ENCODE measurements at regions of chr1 and their contacts with region 1.

Region 1: GRCh38 chr1:171781176-171781875 is at the start of gene METTL13:
- DNase-seq: peak; percentile 98
- ATAC-seq: peak; percentile 99 to 100 (median 100)
- H3K4me3 ChIP-seq: peak within 1 kb of the TSS; percentile 39 to 91 (median 74)
- H3K27ac ChIP-seq: peak within 1 kb of the TSS; percentile 60 to 92 (median 86)
- H3K4me1 ChIP-seq: peaks cover 0 to 40% (median 22%) of the 10 kb centered on the region in 9 donors
- H3K27me3 ChIP-seq: no peaks in the 10 kb centered on the region
- CTCF ChIP-seq: peak in 1 of 9 donors; percentile 13
- total RNA-seq, gene METTL13: 12.9 to 20.2 (median 16.5) TPM

Region 2: DNA sequence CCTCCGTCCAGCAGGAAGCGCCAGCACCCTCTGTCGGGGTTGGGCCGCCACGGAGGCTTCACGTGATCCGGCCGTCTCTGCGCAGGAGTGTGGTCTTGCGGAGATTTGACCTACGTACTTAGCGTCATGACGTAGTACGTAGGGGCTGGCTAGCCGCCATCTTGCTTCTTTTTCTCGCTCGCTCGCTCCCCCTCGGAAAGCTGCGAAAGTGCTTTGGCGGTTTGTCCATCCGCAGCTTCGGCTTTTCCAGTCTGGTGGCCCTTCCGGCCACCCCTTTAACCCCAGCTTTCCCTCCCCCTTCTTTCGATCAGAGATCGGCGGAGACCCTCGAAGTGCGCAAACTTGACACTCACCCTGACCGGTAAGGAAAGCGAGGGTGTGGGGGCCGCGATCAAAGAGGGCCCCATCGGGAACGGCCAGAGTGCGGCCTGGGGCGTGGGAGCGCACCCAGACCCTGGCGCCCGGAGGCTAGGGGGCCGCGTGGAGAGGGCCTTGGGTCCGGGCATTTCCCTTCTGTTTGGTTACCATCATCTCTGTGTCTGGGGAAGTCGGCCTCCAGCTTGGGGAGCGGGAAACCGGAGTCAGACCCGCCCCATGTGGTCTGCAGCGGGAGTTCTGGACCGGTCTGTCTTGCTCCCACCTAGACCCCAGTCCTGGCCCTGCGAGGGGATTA is 295.8 kb before region 1 on chr1 and contains the start of gene PRRC2C:
- intact Hi-C with region 1: loop called in 1 of 10 experiments (anchors 5 kb)
- DNase-seq: peak; percentile 97 to 98
- ATAC-seq: peak; percentile 99 to 100 (median 99)
- H3K4me3 ChIP-seq: peak within 1 kb of the TSS; percentile 77 to 99 (median 90)
- H3K27ac ChIP-seq: peak within 1 kb of the TSS; percentile 92 to 100 (median 98)
- H3K4me1 ChIP-seq: peaks cover 2 to 51% (median 42%) of the 10 kb centered on the region in 9 donors
- H3K27me3 ChIP-seq: no peaks in the 10 kb centered on the region
- CTCF ChIP-seq: peak in 8 of 9 donors; percentile 4 to 93 (median 76)
- total RNA-seq, gene PRRC2C: 47.6 to 77.2 (median 60.0) TPM

Region 3: DNA sequence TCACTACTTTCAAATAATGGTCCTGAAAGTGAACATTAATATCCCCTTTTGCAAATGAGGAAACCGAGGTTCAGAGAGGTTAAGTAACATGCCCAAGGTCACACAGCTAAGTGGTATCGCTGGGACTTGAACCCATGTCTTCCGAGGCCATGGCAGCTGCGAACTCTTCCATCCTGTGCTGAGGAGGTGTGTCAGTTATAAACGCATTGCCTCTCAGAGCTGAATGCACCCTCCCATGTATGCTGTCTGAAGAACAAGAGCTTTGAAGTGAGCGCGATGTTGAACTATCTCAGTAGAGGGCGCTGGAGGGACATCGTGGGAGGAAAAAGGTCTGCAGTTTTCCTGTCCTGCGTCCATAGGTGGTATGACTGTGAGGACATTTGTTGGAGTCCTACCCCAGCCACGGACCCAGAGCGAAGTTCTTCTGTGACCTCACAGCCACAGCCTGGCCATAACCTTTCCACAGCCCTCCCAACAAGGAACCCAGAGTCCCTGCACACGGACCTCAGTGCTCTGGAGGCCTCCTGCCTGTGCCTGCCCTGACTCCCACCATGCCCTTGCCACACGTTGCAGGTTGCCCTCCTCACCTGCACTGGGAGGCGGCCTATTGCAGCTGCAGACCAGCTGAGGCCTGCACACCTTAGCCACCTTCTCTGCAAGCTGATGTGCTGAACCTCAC is 136.4 kb before region 1 on chr1:
- intact Hi-C with region 1: loop called in 6 of 10 experiments (anchors 1 to 10 kb)
- DNase-seq: peak; percentile 60 to 87
- ATAC-seq: peak; percentile 75 to 94 (median 86)
- H3K4me3 ChIP-seq: peak overlapping the region in 2 of 10 donors; percentile 21 to 25
- H3K27ac ChIP-seq: peak overlapping the region; percentile 46 to 91 (median 82)
- H3K4me1 ChIP-seq: peaks cover 5 to 25% (median 17%) of the 10 kb centered on the region in 9 donors
- H3K27me3 ChIP-seq: no peaks in the 10 kb centered on the region
- CTCF ChIP-seq: peak; percentile 71 to 89 (median 80)

Region 4: GRCh38 chr1:171741872-171742576 is 39.3 kb before region 1 on chr1 and contains the start of gene VAMP4:
- intact Hi-C with region 1: loop called in 7 of 10 experiments (anchors 1 to 5 kb)
- DNase-seq: peak; percentile 89 to 90
- ATAC-seq: peak; percentile 92 to 96 (median 94)
- H3K4me3 ChIP-seq: peak within 1 kb of the TSS; percentile 68 to 99 (median 89)
- H3K27ac ChIP-seq: peak within 1 kb of the TSS; percentile 85 to 97 (median 94)
- H3K4me1 ChIP-seq: peaks cover 3 to 56% (median 27%) of the 10 kb centered on the region in 9 donors
- H3K27me3 ChIP-seq: no peaks in the 10 kb centered on the region
- CTCF ChIP-seq: no peak
- total RNA-seq, gene VAMP4: 6.6 to 12.5 (median 9.2) TPM

Region 5: DNA sequence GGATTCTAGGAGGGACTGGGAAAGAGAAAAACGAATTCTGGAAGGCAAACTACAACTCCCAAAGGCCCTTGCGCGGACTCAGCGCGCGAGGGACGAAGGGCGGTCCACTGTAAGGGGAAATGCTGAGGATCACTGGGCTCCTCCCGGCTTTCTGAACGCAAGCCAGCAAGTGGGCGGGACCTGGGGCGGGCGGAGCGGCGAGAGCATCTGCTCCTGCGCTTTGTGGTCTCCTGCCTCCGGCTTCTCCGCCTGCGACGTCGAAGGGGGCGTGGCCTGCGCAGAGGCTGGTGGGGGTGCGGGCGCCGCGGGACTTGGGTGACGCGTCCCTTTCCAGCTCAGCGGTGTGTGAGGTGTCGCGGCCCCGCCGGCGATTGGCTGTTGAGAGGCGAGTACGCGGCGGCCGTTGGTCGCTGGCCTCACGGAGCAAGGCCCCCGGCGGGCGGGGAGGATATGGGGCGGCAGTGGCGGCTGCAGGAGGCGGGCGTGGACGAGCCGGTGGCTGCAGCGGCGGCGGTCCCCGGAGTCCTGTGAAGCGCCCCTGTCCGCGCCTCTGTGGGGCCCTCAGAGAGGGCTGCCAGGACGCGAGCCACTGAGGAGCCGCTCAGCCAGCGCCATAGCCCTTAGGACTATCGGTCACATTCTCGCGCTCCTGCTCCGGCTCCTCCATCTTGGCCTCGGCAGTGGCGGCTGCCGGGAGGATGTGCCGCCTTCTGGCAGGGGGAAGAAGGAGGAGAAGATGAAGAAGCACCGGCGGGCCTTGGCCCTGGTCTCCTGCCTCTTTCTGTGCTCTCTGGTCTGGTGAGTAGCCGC is 751.6 kb after region 1 on chr1 and contains the start of gene SUCO:
- intact Hi-C with region 1: loop called in 2 of 10 experiments (anchors 5 kb)
- DNase-seq: peak; percentile 100
- ATAC-seq: peak; percentile 95 to 99 (median 97)
- H3K4me3 ChIP-seq: peak within 1 kb of the TSS; percentile 66 to 93 (median 84)
- H3K27ac ChIP-seq: peak within 1 kb of the TSS; percentile 93 to 99 (median 97)
- H3K4me1 ChIP-seq: peaks cover 10 to 50% (median 39%) of the 10 kb centered on the region in 9 donors
- H3K27me3 ChIP-seq: no peaks in the 10 kb centered on the region
- CTCF ChIP-seq: peak in 4 of 9 donors; percentile 23 to 37 (median 26)
- total RNA-seq, gene SUCO: 18.5 to 31.4 (median 27.0) TPM

Measured in heart right ventricle (tissue), 16 donors.